Left lung (tissue), 14 donors: ENCODE measurements at regions of chr17 and their contacts with region 1.

Region 1: GRCh38 chr17:64155751-64156544 is 26.0 kb upstream of the ERN1 start:
- DNase-seq: peak in 2 of 4 donors; percentile 70 to 75
- ATAC-seq: peak; percentile 82
- H3K4me3 ChIP-seq: no peak overlapping the region
- H3K27ac ChIP-seq: peak overlapping the region; percentile 50 to 74
- H3K4me1 ChIP-seq: peaks cover 25 to 41% of the 10 kb centered on the region in 2 donors
- H3K27me3 ChIP-seq: no peaks in the 10 kb centered on the region
- CTCF ChIP-seq: no peak

Region 2: DNA sequence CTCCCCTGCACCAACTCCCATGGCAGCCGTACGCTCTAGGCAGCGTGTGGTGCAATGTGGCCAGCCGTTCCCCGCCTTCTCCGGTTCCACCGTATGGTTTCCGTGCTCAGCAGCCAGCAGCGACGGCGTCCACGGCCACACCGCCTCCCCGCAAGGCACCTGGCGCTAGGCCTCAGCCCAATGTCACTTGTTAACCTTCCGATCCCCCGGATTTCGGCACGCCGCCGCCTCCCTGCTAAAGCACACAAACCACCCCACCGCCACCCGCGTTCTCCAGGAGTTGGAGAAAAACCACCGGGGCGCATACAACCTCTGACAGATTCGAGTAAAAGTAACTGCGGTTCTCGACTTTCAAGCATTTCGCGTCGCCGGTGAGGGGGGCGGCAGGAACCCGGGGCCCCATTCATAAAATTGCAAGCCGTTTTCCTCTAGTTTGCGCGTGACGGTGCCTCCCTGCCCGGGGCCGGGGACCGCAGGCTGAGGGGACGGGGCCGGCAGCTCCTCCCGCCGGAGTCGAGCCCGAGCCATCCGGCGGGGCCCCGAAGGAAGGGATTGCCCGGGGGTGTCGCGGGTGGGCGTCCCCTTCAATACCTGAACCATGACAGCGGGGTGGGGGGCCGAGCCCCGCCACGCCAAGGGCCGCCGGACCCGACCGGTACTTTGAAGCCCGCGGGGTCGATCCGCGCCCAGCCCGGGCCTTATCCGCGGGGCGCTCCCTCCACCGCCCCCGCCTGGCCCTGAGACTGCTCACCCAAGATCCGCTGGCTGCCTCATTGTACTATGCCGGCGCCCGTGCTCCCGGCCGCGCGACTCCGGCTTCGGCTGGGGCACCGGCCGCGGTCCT is 106.7 kb after region 1 on chr17 and contains the start of gene TEX2:
- intact Hi-C with region 1: loop called in 1 of 2 experiments (anchors 10 kb)
- DNase-seq: peak in 3 of 4 donors; percentile 37 to 89 (median 65)
- ATAC-seq: peak; percentile 66
- H3K4me3 ChIP-seq: peak within 1 kb of the TSS; percentile 91 to 93
- H3K27ac ChIP-seq: peak within 1 kb of the TSS; percentile 74 to 90
- H3K4me1 ChIP-seq: peaks cover 3 to 36% of the 10 kb centered on the region in 2 donors
- H3K27me3 ChIP-seq: no peaks in the 10 kb centered on the region
- CTCF ChIP-seq: no peak
- polyA plus RNA-seq, gene TEX2: 20.1 to 28.0 (median 22.6) TPM